Motor neuron (in vitro differentiated cells): ENCODE measurements at regions of chr15 and their contacts with region 1.

Region 1: DNA sequence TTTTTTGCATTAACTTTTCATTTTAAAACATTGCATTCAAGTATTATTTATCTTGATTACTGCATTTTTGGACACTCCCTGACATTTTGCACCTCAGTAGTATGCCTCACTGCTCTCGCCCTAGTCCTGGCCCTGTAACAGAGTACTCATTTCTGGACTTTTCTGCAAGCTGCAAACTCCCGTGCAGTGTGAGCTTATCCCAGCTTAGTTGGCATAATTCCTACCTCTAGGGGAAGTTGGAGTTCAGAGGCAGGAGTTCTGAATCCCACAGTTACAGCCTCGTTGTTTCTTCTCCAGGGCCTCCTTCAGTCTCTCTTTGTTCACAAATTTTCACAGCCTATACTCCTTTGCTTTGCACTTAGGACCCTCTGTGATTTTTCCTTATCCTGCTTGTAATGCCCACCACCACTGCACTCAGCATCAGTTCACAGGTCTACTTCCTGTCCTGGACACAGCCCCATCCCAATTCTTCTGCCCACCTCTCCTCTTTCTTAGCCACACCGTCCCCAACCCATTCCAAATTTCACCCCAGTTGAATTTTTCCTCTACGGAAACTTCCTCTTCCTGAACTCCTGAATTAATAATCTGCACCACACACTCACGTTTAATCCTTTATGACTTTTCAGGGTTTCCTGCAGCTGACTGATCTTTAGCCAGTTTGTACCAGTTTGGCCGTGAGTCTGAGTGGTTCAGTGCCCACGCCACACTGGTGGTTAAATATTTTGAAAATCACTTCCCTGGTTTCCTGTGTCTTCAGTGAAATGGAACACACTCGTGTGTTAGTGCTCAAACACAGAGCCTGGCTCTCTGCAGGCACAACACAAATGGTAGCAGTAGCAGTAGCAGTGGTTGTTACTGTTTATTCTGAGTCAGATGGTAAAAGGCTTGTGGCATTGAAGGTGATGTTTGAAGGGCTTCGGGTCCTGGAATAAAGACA is 6.3 kb upstream of the CTSH start:
- ATAC-seq: peak in 5 of 8 experiments; percentile 46 to 89 (median 71)
- H3K4me3 ChIP-seq: no peak overlapping the region
- H3K27ac ChIP-seq: no peak overlapping the region
- H3K4me1 ChIP-seq: no peaks in the 10 kb centered on the region

Region 2: GRCh38 chr15:79071901-79072300 is 120.7 kb after region 1 on chr15:
- in situ Hi-C with region 1: loop called in 1 of 9 experiments (anchors 25 kb)
- ATAC-seq: peak in 2 of 8 experiments; percentile 82 to 83
- H3K4me3 ChIP-seq: no peak overlapping the region
- H3K27ac ChIP-seq: no peak overlapping the region
- H3K4me1 ChIP-seq: peaks cover 0 to 4% of the 10 kb centered on the region in 2 donors